Common myeloid progenitor, CD34-positive (primary cell): ENCODE measurements at regions of chr7 and their contacts with region 1.

Region 1: GRCh38 chr7:73606801-73607691 is 17.3 kb downstream of the MLXIPL start:
- DNase-seq: peak; percentile 50 to 68 (median 59)
- H3K4me3 ChIP-seq: no peak overlapping the region
- H3K27ac ChIP-seq: no peak overlapping the region
- H3K4me1 ChIP-seq: peaks cover 0 to 3% (median 1%) of the 10 kb centered on the region in 4 experiments
- H3K27me3 ChIP-seq: peaks cover 3 to 86% (median 16%) of the 10 kb centered on the region in 5 experiments

Region 2: DNA sequence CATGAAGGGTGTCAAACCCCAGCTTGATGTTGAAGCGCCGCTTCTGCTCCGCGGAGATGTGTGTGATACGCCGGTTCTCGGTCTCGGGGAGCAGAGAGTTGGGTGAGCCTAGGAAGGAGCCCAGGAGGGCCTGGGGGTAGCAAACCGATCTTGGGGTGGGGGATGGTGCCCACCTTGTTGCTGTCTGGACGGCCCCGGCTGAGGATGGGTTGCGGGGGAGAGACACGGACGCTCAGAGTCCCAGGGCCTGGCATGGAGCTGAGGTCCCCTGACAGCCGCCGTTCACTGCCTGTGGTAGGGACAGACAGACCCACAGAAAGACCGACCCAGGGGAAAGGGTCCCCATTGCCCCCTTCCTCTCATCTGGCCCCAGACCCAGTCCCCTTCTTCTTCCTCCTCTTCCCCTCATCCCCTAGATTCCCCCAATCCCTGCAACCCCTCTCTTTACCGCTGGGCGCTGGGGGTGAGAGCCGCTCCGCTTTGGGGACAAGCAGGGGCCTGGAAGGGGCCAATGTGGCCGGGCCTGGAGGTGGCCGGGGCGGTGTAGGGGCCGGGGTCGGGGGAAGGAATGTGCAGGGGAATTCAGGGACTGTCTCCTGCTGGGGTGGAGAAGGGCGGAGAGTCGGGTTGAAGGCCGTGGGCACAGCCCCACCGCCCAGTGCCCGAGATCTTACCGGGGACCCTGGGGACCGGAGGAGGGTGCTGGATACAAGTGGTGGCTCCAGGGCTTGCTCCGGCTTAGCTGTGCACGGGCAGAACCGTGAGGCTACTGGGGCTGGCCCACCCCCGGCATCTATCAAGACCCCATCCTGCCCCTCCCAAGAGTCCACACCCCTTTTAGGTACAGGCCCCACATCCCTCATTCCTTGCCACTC is 10.6 kb before region 1 on chr7:
- CTCF ChIA-PET with region 1: interaction called, 11 read pairs
- POLR2A ChIA-PET with region 1: no interaction called
- DNase-seq: no peak
- H3K4me3 ChIP-seq: no peak overlapping the region
- H3K27ac ChIP-seq: no peak overlapping the region
- H3K4me1 ChIP-seq: no peaks in the 10 kb centered on the region
- H3K27me3 ChIP-seq: peaks cover 4 to 77% (median 11%) of the 10 kb centered on the region in 5 experiments

Region 3: GRCh38 chr7:73628504-73628903 is 21.5 kb after region 1 on chr7:
- CTCF ChIA-PET with region 1: interaction called, 11 read pairs
- POLR2A ChIA-PET with region 1: no interaction called
- DNase-seq: no peak
- H3K4me3 ChIP-seq: no peak overlapping the region
- H3K27ac ChIP-seq: no peak overlapping the region
- H3K4me1 ChIP-seq: peaks cover 0 to 8% (median 4%) of the 10 kb centered on the region in 4 experiments
- H3K27me3 ChIP-seq: peaks cover 0 to 76% (median 28%) of the 10 kb centered on the region in 5 experiments

Region 4: GRCh38 chr7:73701357-73701995 is 94.4 kb after region 1 on chr7:
- CTCF ChIA-PET with region 1: interaction called, 10 read pairs
- POLR2A ChIA-PET with region 1: no interaction called
- DNase-seq: peak in 2 of 3 donors; percentile 53 to 57
- H3K4me3 ChIP-seq: no peak overlapping the region
- H3K27ac ChIP-seq: no peak overlapping the region
- H3K4me1 ChIP-seq: peaks cover 0 to 10% (median 3%) of the 10 kb centered on the region in 4 experiments
- H3K27me3 ChIP-seq: peaks cover 0 to 65% (median 30%) of the 10 kb centered on the region in 5 experiments

Region 5: GRCh38 chr7:73721377-73721817 is 114.4 kb after region 1 on chr7:
- CTCF ChIA-PET with region 1: interaction called, 24 read pairs
- POLR2A ChIA-PET with region 1: no interaction called
- DNase-seq: no peak
- H3K4me3 ChIP-seq: no peak overlapping the region
- H3K27ac ChIP-seq: no peak overlapping the region
- H3K4me1 ChIP-seq: peaks cover 0 to 34% (median 32%) of the 10 kb centered on the region in 4 experiments
- H3K27me3 ChIP-seq: peaks cover 0 to 85% (median 33%) of the 10 kb centered on the region in 5 experiments

Region 6: DNA sequence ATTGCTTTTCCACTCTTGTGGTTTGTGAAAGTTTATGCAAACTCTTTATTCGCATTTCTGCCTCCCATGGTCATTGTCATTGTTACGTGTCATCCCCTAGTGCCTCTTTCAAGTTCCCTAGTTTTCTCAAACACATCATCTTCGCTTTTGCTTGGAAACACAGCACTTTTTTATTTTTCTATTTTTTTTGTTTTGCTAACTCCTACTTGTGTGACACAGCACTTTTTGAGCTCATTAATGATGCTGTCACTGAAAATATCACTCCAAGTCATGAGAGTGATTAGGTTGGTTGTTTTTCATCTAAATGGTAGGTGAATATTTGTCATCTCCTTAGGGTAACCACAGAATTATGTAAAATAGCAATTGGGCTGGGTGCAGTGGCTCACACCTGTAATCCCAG is 120.9 kb after region 1 on chr7:
- CTCF ChIA-PET with region 1: interaction called, 81 read pairs
- POLR2A ChIA-PET with region 1: no interaction called
- DNase-seq: peak in 2 of 3 donors; percentile 40 to 50
- H3K4me3 ChIP-seq: no peak overlapping the region
- H3K27ac ChIP-seq: no peak overlapping the region
- H3K4me1 ChIP-seq: no peaks in the 10 kb centered on the region
- H3K27me3 ChIP-seq: peaks cover 0 to 83% (median 14%) of the 10 kb centered on the region in 5 experiments

Region 7: GRCh38 chr7:73738612-73739374 is 131.7 kb after region 1 on chr7 and contains the start of gene ABHD11:
- CTCF ChIA-PET with region 1: interaction called, 81 read pairs
- POLR2A ChIA-PET with region 1: interaction called, 6 read pairs
- DNase-seq: peak; percentile 93 to 97 (median 95)
- H3K4me3 ChIP-seq: peak within 1 kb of the TSS; percentile 56 to 90 (median 80)
- H3K27ac ChIP-seq: peak within 1 kb of the TSS; percentile 40 to 73
- H3K4me1 ChIP-seq: peaks cover 0 to 22% (median 18%) of the 10 kb centered on the region in 4 experiments
- H3K27me3 ChIP-seq: peaks cover 0 to 8% (median 4%) of the 10 kb centered on the region in 5 experiments